CD4-positive, alpha-beta memory T cell (primary cell): ENCODE measurements at regions of chr3 and their contacts with region 1.

Region 1: GRCh38 chr3:143001369-143002082 is at the start of gene U2SURP:
- DNase-seq: peak; percentile 88 to 96 (median 92)
- H3K4me3 ChIP-seq: peak within 1 kb of the TSS; percentile 82 to 100
- H3K4me3 Mint-ChIP-seq: peak within 1 kb of the TSS; percentile 97 to 100 (median 99)
- H3K27ac ChIP-seq: peak within 1 kb of the TSS; percentile 95
- H3K27ac Mint-ChIP-seq: peak within 1 kb of the TSS; percentile 97 to 100 (median 100)
- H3K4me1 ChIP-seq: peaks cover 49% of the 10 kb centered on the region
- H3K4me1 Mint-ChIP-seq: peaks cover 28 to 57% (median 38%) of the 10 kb centered on the region in 4 donors
- H3K27me3 ChIP-seq: no peaks in the 10 kb centered on the region
- H3K27me3 Mint-ChIP-seq: peaks cover 0 to 2% of the 10 kb centered on the region in 2 donors
- total RNA-seq, gene U2SURP: 137 TPM

Region 2: GRCh38 chr3:141796081-141796888 is 1205.2 kb before region 1 on chr3:
- CTCF ChIA-PET with region 1: no interaction called
- POLR2A ChIA-PET with region 1: interaction called, 5 read pairs
- intact Hi-C with region 1: loop called (anchors 5 kb)
- DNase-seq: peak; percentile 61 to 85 (median 66)
- H3K4me3 ChIP-seq: peak overlapping the region; percentile 61 to 76
- H3K4me3 Mint-ChIP-seq: peak overlapping the region; percentile 90 to 96 (median 92)
- H3K27ac ChIP-seq: peak overlapping the region; percentile 65
- H3K27ac Mint-ChIP-seq: peak overlapping the region; percentile 97 to 99 (median 98)
- H3K4me1 ChIP-seq: peaks cover 52% of the 10 kb centered on the region
- H3K4me1 Mint-ChIP-seq: peaks cover 46 to 60% (median 55%) of the 10 kb centered on the region in 4 donors
- H3K27me3 ChIP-seq: no peaks in the 10 kb centered on the region
- H3K27me3 Mint-ChIP-seq: no peaks in the 10 kb centered on the region

Region 3: DNA sequence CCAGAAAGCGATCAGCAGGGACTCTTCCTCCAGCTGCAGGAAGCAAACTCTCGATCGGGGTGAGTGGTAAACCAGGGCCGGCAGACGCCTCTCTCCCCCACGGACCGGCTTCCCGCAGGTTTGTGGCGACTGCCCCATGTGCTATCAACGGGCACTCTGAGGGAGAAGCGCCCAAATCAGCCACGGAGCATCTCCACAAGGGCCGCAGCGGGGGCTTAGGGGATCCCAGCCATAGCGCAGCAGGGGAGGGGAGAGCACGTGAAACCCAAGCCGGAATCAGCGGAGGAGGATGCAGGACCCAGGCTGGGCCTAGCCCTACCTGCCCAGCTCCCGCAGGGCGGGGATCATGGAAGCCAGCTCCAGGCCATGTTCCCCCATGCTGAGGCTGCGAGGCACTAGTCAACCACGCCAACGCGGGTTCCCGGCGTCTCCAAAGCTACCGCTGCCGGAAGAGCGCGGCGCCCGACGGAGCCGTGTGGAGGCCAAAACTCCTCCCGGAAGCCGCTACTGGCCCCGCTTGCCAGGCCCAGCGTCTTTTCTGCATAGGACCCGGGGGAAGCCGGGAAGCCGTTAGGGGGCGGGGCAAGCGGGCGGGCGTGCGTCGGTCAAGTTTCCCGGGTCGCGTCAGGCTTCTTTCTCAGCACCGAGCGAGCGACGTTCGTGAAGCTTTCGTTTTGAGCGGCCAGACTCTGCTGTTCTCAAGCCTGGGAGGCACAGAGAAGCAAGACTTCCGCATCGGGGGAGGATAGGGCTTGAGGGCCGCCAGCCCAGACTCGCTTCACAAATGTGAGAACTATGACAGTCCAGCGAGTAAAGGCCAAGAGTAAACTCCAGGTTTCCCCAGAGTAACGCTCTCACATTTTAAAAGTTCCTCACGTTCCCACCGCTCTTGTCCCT is 423.0 kb before region 1 on chr3 and contains the start of gene ATR:
- CTCF ChIA-PET with region 1: interaction called, 3 read pairs
- POLR2A ChIA-PET with region 1: interaction called, 72 read pairs
- intact Hi-C with region 1: loop called (anchors 1 kb)
- DNase-seq: peak; percentile 95 to 96 (median 96)
- H3K4me3 ChIP-seq: peak within 1 kb of the TSS; percentile 90 to 100
- H3K4me3 Mint-ChIP-seq: peak within 1 kb of the TSS; percentile 93 to 99 (median 98)
- H3K27ac ChIP-seq: peak within 1 kb of the TSS; percentile 94
- H3K27ac Mint-ChIP-seq: peak within 1 kb of the TSS; percentile 91 to 99 (median 99)
- H3K4me1 ChIP-seq: peaks cover 44% of the 10 kb centered on the region
- H3K4me1 Mint-ChIP-seq: peaks cover 41 to 66% (median 52%) of the 10 kb centered on the region in 4 donors
- H3K27me3 ChIP-seq: no peaks in the 10 kb centered on the region
- H3K27me3 Mint-ChIP-seq: peaks cover 2 to 4% of the 10 kb centered on the region in 2 donors
- total RNA-seq, gene ATR: 42.3 to 45.6 TPM

Region 4: GRCh38 chr3:142723968-142724681 is 277.4 kb before region 1 on chr3 and contains the start of gene TRPC1:
- CTCF ChIA-PET with region 1: no interaction called
- POLR2A ChIA-PET with region 1: interaction called, 16 read pairs
- intact Hi-C with region 1: loop called (anchors 1 kb)
- DNase-seq: peak; percentile 80 to 87 (median 84)
- H3K4me3 ChIP-seq: peak within 1 kb of the TSS; percentile 58 to 65
- H3K4me3 Mint-ChIP-seq: peak within 1 kb of the TSS; percentile 88 to 91 (median 90)
- H3K27ac ChIP-seq: peak within 1 kb of the TSS; percentile 55
- H3K27ac Mint-ChIP-seq: peak within 1 kb of the TSS; percentile 74 to 96 (median 95)
- H3K4me1 ChIP-seq: peaks cover 12% of the 10 kb centered on the region
- H3K4me1 Mint-ChIP-seq: peaks cover 8 to 15% (median 15%) of the 10 kb centered on the region in 4 donors
- H3K27me3 ChIP-seq: no peaks in the 10 kb centered on the region
- H3K27me3 Mint-ChIP-seq: peaks cover 8 to 15% of the 10 kb centered on the region in 2 donors
- total RNA-seq, gene TRPC1: 6.0 to 8.8 TPM

Region 5: GRCh38 chr3:143119009-143119914 is 117.7 kb after region 1 on chr3 and contains the start of gene CHST2:
- CTCF ChIA-PET with region 1: no interaction called
- POLR2A ChIA-PET with region 1: interaction called, 4 read pairs
- intact Hi-C with region 1: loop called (anchors 2 kb)
- DNase-seq: peak in 4 of 5 donors; percentile 53 to 69 (median 62)
- H3K4me3 ChIP-seq: peak within 1 kb of the TSS; percentile 68 to 76
- H3K4me3 Mint-ChIP-seq: peak within 1 kb of the TSS; percentile 85 to 94 (median 90)
- H3K27ac ChIP-seq: peak within 1 kb of the TSS; percentile 26
- H3K27ac Mint-ChIP-seq: peak within 1 kb of the TSS; percentile 42 to 77 (median 61)
- H3K4me1 ChIP-seq: peaks cover 19% of the 10 kb centered on the region
- H3K4me1 Mint-ChIP-seq: peaks cover 18 to 36% (median 22%) of the 10 kb centered on the region in 4 donors
- H3K27me3 ChIP-seq: no peaks in the 10 kb centered on the region
- H3K27me3 Mint-ChIP-seq: peaks cover 0 to 10% of the 10 kb centered on the region in 2 donors
- total RNA-seq, gene CHST2: 1.1 TPM